ENCODE measurements at regions of chr14 and their contacts with region 1.

Region 1: GRCh38 chr14:90383075-90383730 is 13.6 kb upstream of the CALM1 start:
- DNase-seq: peak; percentile 99 to 100 (median 99)
- H3K4me3 ChIP-seq: peak overlapping the region; percentile 55 to 97 (median 87)
- H3K4me3 Mint-ChIP-seq: no peak overlapping the region
- H3K27ac ChIP-seq: peak overlapping the region; percentile 98 to 100
- H3K27ac Mint-ChIP-seq: no peak overlapping the region
- H3K4me1 ChIP-seq: peaks cover 18 to 25% of the 10 kb centered on the region in 2 donors
- H3K4me1 Mint-ChIP-seq: peaks cover 14% of the 10 kb centered on the region
- H3K27me3 ChIP-seq: no peaks in the 10 kb centered on the region
- H3K27me3 Mint-ChIP-seq: peaks cover 0 to 3% (median 1%) of the 10 kb centered on the region in 3 donors
- CTCF ChIP-seq: no peak

Region 2: DNA sequence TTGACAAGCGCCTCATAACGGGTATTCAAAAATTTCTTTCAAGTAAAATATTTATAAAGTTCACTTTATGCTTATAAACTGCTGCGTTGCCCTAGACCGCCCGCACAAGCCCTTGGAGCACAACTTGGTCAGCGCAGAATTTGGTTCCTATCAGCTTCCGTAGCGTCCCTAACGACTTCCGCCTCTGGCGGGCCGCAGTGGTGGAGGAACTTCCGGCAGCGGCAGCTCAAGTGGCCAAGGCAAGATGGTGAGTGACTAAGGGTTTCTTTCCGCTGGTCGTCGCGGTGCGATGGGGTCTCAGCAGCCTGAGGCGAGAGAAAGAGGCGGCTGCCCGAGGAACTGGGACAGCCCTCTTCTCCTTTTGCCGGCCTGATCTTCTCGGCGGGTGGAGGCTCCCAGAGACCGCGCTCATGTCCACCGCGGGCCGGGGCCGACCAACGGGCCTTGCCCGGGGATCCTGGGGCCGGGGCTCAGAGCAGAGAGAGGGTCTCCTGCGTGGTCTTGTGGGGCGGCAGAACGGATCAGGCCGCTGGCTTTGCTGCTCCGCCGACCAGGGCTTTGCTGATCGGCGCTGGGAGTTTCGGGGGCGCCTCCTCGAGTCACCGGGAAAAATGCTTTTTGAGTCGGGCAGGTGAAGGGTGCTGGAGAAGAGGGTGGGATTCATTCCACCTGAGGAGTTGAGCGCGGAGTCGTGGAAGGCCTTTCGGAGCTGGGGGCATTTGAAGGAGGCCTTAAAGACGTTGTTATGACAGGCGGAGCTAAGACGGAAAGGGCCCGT is 126.7 kb before region 1 on chr14 and contains the start of gene PSMC1:
- intact Hi-C with region 1: loop called in 1 of 2 experiments (anchors 5 kb)
- DNase-seq: peak; percentile 89 to 93 (median 93)
- H3K4me3 ChIP-seq: peak within 1 kb of the TSS; percentile 69 to 97 (median 89)
- H3K4me3 Mint-ChIP-seq: peak within 1 kb of the TSS; percentile 97 to 99
- H3K27ac ChIP-seq: peak within 1 kb of the TSS; percentile 66 to 96
- H3K27ac Mint-ChIP-seq: peak within 1 kb of the TSS; percentile 81 to 96 (median 94)
- H3K4me1 ChIP-seq: peaks cover 14 to 23% of the 10 kb centered on the region in 2 donors
- H3K4me1 Mint-ChIP-seq: peaks cover 22% of the 10 kb centered on the region
- H3K27me3 ChIP-seq: peaks cover 0 to 4% of the 10 kb centered on the region in 2 donors
- H3K27me3 Mint-ChIP-seq: peaks cover 11 to 18% (median 18%) of the 10 kb centered on the region in 3 donors
- CTCF ChIP-seq: no peak
- polyA plus RNA-seq, gene PSMC1: 53.4 to 158 (median 128) TPM

Region 3: GRCh38 chr14:90294872-90295271 is 88.3 kb before region 1 on chr14:
- intact Hi-C with region 1: loop called in 1 of 2 experiments (anchors 5 kb)
- DNase-seq: peak; percentile 81 to 93 (median 91)
- H3K4me3 ChIP-seq: no peak overlapping the region
- H3K4me3 Mint-ChIP-seq: no peak overlapping the region
- H3K27ac ChIP-seq: peak overlapping the region; percentile 32 to 94
- H3K27ac Mint-ChIP-seq: peak overlapping the region; percentile 46 to 96 (median 94)
- H3K4me1 ChIP-seq: peaks cover 59 to 62% of the 10 kb centered on the region in 2 donors
- H3K4me1 Mint-ChIP-seq: peaks cover 51% of the 10 kb centered on the region
- H3K27me3 ChIP-seq: no peaks in the 10 kb centered on the region
- H3K27me3 Mint-ChIP-seq: peaks cover 0 to 5% (median 3%) of the 10 kb centered on the region in 3 donors
- CTCF ChIP-seq: no peak

Region 4: DNA sequence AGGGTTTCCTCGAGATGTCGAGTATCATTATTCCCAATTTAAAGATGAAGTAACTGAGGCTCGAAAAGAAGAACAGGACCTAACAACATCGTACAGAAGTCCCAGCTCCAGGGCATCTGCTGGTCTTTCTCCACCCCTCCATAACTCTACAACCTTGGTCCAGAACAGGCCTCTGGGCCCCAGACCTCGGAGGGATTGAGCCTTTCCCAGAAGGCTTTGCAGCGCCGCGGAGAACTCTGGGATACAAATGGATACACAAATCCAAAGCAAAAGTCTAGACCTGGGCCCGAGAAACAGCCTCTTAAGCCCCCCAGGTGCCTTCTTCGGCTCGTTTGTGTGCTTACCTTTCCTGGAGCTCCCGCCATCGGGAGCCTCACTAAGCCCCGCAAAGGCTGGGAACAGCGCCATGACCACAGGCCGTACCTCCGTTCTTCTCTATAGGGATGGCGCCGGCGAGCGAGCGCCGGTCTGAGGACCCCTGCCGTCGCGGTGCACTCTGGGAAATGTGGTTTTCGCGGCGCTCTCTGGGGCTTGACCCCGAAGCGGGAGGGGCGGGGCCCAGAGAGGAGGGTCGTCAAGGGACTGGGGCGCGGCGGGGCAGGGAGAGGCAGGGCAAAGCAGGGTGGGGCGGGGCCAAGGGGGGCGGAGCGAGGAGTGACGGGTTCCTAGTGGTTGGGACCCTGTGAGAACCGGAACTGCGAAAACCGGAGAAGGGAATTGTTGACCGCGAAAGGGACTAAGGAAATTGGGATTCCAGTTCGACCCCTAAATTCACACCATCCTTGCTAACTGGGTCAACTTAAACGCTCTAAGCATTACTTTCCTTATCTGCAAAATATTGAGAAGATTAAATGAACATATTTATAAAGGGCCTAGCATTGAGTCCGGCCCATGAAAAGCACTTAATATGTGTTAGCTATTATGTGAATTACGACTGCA is 51.4 kb before region 1 on chr14 and contains the start of gene NRDE2:
- intact Hi-C with region 1: loop called (anchors 5 kb)
- DNase-seq: peak; percentile 92 to 93 (median 92)
- H3K4me3 ChIP-seq: peak within 1 kb of the TSS; percentile 67 to 93 (median 89)
- H3K4me3 Mint-ChIP-seq: peak within 1 kb of the TSS; percentile 88 to 90
- H3K27ac ChIP-seq: peak within 1 kb of the TSS; percentile 86 to 93
- H3K27ac Mint-ChIP-seq: peak within 1 kb of the TSS; percentile 84 to 95 (median 93)
- H3K4me1 ChIP-seq: peaks cover 15 to 16% of the 10 kb centered on the region in 2 donors
- H3K4me1 Mint-ChIP-seq: peaks cover 23% of the 10 kb centered on the region
- H3K27me3 ChIP-seq: peaks cover 10 to 23% of the 10 kb centered on the region in 2 donors
- H3K27me3 Mint-ChIP-seq: peaks cover 15 to 27% (median 16%) of the 10 kb centered on the region in 3 donors
- CTCF ChIP-seq: no peak
- polyA plus RNA-seq, gene NRDE2: 4.7 to 7.4 (median 6.7) TPM

Region 5: GRCh38 chr14:90444036-90444696 is 61.0 kb after region 1 on chr14:
- intact Hi-C with region 1: no loop called
- DNase-seq: no peak
- H3K4me3 ChIP-seq: no peak overlapping the region
- H3K4me3 Mint-ChIP-seq: no peak overlapping the region
- H3K27ac ChIP-seq: no peak overlapping the region
- H3K27ac Mint-ChIP-seq: no peak overlapping the region
- H3K4me1 ChIP-seq: no peaks in the 10 kb centered on the region
- H3K4me1 Mint-ChIP-seq: peaks cover 7% of the 10 kb centered on the region
- H3K27me3 ChIP-seq: no peaks in the 10 kb centered on the region
- H3K27me3 Mint-ChIP-seq: peaks cover 2 to 6% (median 5%) of the 10 kb centered on the region in 3 donors
- CTCF ChIP-seq: no peak

Region 6: GRCh38 chr14:90758028-90758889 is 375.1 kb after region 1 on chr14:
- intact Hi-C with region 1: loop called in 1 of 2 experiments (anchors 5 kb)
- DNase-seq: peak; percentile 94 to 95 (median 95)
- H3K4me3 ChIP-seq: peak overlapping the region; percentile 51 to 80 (median 75)
- H3K4me3 Mint-ChIP-seq: peak overlapping the region; percentile 80 to 88
- H3K27ac ChIP-seq: peak overlapping the region; percentile 47 to 86
- H3K27ac Mint-ChIP-seq: peak overlapping the region; percentile 35 to 87 (median 76)
- H3K4me1 ChIP-seq: peaks cover 15% of the 10 kb centered on the region in 2 donors
- H3K4me1 Mint-ChIP-seq: peaks cover 15% of the 10 kb centered on the region
- H3K27me3 ChIP-seq: no peaks in the 10 kb centered on the region
- H3K27me3 Mint-ChIP-seq: peaks cover 4 to 8% (median 5%) of the 10 kb centered on the region in 3 donors
- CTCF ChIP-seq: peak; percentile 86

Measured in CD14-positive monocyte (primary cell).